ENCODE measurements at regions of chr13 and their contacts with region 1.

Region 1: DNA sequence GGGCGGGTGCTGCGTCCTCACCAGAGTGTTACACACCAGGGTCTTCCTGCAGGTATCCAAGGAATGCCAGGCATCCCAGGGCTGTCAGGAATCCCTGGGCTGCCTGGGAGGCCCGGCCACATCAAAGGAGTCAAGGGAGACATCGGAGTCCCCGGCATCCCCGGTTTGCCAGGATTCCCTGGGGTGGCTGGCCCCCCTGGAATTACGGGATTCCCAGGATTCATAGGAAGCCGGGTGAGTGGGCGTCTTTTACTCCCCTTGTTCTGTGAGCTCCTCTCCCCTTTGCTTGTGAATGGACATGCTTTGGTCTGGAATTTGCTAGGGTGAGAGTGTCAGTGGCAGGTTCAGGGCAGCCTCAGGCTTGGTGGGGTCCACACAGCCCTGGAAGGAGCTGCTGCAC is 75.9 kb downstream of the RAB20 start:
- DNase-seq: peak; percentile 89 to 95
- H3K4me3 ChIP-seq: no peak overlapping the region
- H3K4me3 Mint-ChIP-seq: peak overlapping the region; percentile 51
- H3K27ac Mint-ChIP-seq: peak overlapping the region; percentile 95
- H3K4me1 ChIP-seq: peaks cover 45% of the 10 kb centered on the region
- H3K4me1 Mint-ChIP-seq: peaks cover 25% of the 10 kb centered on the region
- H3K27me3 ChIP-seq: no peaks in the 10 kb centered on the region
- H3K27me3 Mint-ChIP-seq: no peaks in the 10 kb centered on the region
- CTCF ChIP-seq: no peak

Region 2: GRCh38 chr13:110509971-110510786 is 24.6 kb after region 1 on chr13:
- CTCF ChIA-PET with region 1: no interaction called
- POLR2A ChIA-PET with region 1: interaction called, 3 read pairs
- intact Hi-C with region 1: loop called (anchors 1 kb)
- DNase-seq: peak in 1 of 2 experiments; percentile 37
- H3K4me3 ChIP-seq: no peak overlapping the region
- H3K4me3 Mint-ChIP-seq: no peak overlapping the region
- H3K27ac Mint-ChIP-seq: peak overlapping the region; percentile 69
- H3K4me1 ChIP-seq: peaks cover 53% of the 10 kb centered on the region
- H3K4me1 Mint-ChIP-seq: peaks cover 43% of the 10 kb centered on the region
- H3K27me3 ChIP-seq: no peaks in the 10 kb centered on the region
- H3K27me3 Mint-ChIP-seq: no peaks in the 10 kb centered on the region
- CTCF ChIP-seq: no peak